Posterior vena cava (tissue), 2 donors: ENCODE measurements at regions of chr16 and their contacts with region 1.

Region 1: GRCh38 chr16:57708168-57708567 is 13.6 kb downstream of the DRC7 start:
- DNase-seq: peak; percentile 20

Region 2: DNA sequence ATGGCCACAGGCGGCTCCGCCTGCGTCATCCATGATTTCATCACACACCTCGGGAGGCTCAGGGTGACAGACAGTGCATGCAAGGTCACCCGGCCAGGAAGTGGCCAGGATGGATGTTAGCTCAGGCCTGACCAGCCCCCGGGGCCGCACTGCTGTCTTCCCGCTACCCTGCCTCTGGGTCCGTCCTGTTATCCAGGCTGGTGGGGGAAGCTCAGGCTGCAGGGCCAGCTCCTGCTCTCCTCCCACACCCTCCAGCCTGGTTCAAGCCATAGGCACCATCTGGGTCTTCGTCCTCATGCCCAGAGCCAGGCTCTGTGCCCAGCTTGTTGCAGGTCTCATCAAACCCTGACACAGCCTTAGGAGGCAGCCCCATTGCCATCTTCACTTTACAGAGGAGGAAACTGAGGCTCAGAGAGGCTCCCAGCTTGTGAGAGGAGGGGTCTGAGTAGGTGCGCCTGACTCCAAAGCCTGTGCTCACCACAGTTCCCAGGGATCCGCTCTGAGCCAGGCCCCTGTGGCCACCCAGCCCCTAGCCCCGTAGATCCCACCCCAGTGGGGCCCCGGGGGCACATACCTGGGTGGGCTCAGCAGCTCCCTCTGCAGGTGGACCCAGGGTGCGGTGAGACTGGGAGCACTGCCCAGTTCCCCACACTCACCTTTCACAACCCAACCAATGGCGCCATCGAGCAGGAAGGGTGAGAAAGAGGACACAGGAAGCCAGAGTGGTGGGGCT is 40.5 kb before region 1 on chr16:
- intact Hi-C with region 1: loop called in 1 of 2 experiments (anchors 1 kb)
- DNase-seq: peak; percentile 89